PC-3 (cell line): ENCODE measurements at regions of chr16 and their contacts with region 1.

Region 1: DNA sequence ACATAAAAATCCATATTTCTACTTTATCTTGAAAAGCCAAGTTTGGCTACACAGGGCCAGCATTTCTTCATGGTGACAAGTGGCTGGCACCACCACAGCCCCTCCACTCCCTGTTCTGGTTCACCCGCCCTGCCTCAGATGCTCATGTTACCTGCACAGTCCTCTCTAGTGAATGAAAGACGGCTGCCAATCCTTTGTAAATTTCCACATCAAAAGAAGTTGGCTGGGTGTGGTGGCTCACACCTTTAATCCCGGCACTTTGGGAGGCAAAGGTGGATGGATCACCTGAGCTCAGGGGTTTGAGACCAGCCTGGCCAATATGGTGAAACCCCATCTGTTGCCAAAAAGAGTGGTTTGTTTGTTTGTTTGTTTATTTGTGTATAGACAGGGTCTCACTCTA is 19.9 kb upstream of the CORO1A start:
- DNase-seq: no peak
- ATAC-seq: no peak
- H3K4me3 ChIP-seq: no peak overlapping the region
- H3K27ac ChIP-seq: no peak overlapping the region
- H3K4me1 ChIP-seq: no peaks in the 10 kb centered on the region
- H3K27me3 ChIP-seq: no peaks in the 10 kb centered on the region
- CTCF ChIP-seq: no peak

Region 2: DNA sequence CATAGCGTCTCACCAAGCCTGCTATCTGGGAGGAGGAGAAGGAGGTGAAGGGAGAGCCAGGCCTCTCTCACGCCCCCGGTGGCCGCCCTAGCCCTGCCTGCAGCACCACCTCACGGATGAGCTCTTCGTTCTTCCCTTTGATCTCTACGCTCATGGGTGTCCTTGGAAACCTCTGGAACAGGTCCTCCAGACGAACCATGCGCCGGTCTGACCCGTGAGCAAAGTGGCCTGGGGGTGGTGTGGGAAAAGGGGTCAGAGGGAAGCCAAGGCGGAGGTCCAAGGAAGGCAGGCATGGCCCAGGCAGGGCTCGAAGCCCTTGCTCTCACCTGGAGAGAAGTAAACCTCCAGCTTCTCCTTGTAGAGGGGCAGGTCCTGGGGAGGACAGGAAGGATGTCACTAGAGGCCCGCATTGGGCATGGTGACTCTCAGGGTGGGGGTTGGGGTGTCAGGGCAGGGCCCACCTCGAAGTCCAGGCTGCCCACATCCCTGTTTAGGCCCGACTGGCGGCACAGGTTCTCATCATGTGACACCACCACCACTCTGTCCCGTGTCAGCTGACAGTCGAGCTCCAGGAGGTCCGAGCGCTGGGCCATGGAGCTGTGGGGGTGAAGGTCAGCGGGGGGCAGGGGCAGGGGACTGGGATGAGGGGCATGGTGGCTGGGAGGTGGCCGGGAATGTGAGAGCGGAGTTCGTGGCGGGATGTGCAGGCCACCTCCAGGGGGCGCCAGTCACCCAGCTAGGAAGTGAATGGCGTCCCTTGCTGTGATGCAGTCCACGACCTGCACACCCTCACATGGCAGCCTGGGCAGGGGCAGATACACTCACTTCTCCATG is 51.1 kb before region 1 on chr16:
- CTCF ChIA-PET with region 1: no interaction called
- POLR2A ChIA-PET with region 1: no interaction called
- intact Hi-C with region 1: no loop called
- DNase-seq: peak; percentile 32
- ATAC-seq: peak; percentile 45
- H3K4me3 ChIP-seq: no peak overlapping the region
- H3K27ac ChIP-seq: no peak overlapping the region
- H3K4me1 ChIP-seq: peaks cover 11% of the 10 kb centered on the region
- H3K27me3 ChIP-seq: no peaks in the 10 kb centered on the region
- CTCF ChIP-seq: peak; percentile 55

Region 3: GRCh38 chr16:30136971-30137605 is 26.4 kb before region 1 on chr16:
- CTCF ChIA-PET with region 1: no interaction called
- POLR2A ChIA-PET with region 1: interaction called, 16 read pairs
- intact Hi-C with region 1: no loop called
- DNase-seq: no peak
- ATAC-seq: no peak
- H3K4me3 ChIP-seq: no peak overlapping the region
- H3K27ac ChIP-seq: no peak overlapping the region
- H3K4me1 ChIP-seq: no peaks in the 10 kb centered on the region
- H3K27me3 ChIP-seq: no peaks in the 10 kb centered on the region
- CTCF ChIP-seq: no peak